SK-N-SH (cell line): ENCODE measurements at regions of chr7 and their contacts with region 1.

Region 1: DNA sequence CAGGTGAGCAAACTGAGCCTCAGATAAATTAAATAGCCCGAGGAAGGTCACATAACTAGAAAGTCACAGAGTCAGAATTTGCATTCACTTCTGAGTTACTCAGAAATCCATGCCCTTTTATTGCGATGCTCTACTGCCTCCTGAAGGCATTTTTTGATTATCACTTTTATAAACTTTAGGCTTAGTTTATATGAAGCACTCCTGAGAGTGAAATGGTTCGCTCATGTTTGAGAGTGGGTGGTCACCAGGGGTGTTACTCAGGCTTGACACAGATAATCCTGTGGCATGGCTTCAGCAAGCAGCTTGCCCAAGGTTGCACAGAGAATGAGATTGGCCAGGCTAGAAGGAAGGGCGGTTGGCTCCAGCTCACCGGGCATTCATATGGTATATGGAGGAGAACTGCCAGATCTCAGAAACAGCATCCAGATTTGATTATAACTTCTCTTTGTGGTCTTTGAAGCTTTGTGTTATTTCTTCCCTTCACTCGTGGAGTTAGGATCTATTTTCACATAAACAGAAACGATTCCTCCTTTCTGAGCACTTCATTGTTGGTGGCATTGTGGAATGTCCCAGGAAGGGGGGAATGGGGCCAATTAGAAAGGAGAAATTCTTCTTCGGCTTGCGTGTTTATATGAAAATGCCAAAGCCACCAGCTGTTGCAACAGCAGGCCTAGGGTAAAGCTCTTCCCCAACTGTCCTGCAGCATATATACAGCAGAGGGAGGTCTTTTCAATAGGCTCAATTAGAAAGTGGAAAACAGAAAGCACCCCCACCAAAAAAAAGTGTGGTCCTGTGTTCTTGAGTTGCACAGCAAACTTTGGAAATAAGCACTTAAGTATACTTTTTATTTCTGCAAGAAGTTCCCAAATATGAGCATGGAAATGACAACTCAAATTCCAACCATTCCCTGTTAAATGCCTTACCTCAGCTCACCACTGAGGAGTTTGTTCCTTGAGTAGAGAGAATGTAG is 628.8 kb downstream of the SUGCT start:
- DNase-seq: peak; percentile 8
- H3K4me3 ChIP-seq: no peak overlapping the region
- H3K27ac ChIP-seq: peak overlapping the region; percentile 39 to 86
- H3K4me1 ChIP-seq: peaks cover 11 to 14% of the 10 kb centered on the region in 2 experiments; a peak in 3 of 4 replicates
- H3K27me3 ChIP-seq: no peaks in the 10 kb centered on the region
- CTCF ChIP-seq: peak; percentile 44
- EP300 ChIP-seq: no peak; a peak in 2 of 4 replicates
- RAD21 ChIP-seq: peak; percentile 75

Region 2: DNA sequence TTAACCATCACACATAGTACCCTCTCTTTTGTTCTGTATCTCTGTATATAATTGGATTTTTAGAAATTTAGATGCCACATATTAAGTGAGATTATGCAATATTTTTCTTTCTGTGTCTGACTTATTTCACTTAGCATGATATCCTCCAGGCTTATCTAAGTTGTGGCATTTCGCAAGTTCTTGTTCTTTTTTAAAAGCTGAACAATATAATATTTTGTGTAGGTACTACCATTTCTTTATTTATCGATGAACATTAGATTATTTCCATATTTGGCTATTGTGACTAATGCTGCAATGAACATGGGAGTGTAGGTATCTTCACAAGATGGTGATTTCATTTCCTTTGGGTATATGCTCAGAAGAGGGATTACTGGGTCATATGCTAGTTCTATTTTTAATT is 333.8 kb before region 1 on chr7:
- CTCF ChIA-PET with region 1: no interaction called
- POLR2A ChIA-PET with region 1: no interaction called
- DNase-seq: no peak
- H3K4me3 ChIP-seq: no peak overlapping the region
- H3K27ac ChIP-seq: no peak overlapping the region
- H3K4me1 ChIP-seq: no peaks in the 10 kb centered on the region
- H3K27me3 ChIP-seq: no peaks in the 10 kb centered on the region
- CTCF ChIP-seq: no peak
- EP300 ChIP-seq: no peak
- RAD21 ChIP-seq: no peak

Region 3: GRCh38 chr7:40749877-40750276 is 13.7 kb before region 1 on chr7:
- CTCF ChIA-PET with region 1: interaction called, 23 read pairs
- POLR2A ChIA-PET with region 1: no interaction called
- DNase-seq: no peak
- H3K4me3 ChIP-seq: no peak overlapping the region
- H3K27ac ChIP-seq: peak overlapping the region; percentile 50 to 84; a peak in 3 of 4 replicates
- H3K4me1 ChIP-seq: peaks cover 22 to 26% of the 10 kb centered on the region in 2 experiments; a peak in 3 of 4 replicates
- H3K27me3 ChIP-seq: no peaks in the 10 kb centered on the region
- CTCF ChIP-seq: no peak
- EP300 ChIP-seq: peak in 1 of 2 experiments; percentile 46; a peak in 1 of 4 replicates
- RAD21 ChIP-seq: no peak

Region 4: GRCh38 chr7:40777748-40778312 is 14.2 kb after region 1 on chr7:
- CTCF ChIA-PET with region 1: interaction called, 18 read pairs
- POLR2A ChIA-PET with region 1: no interaction called
- DNase-seq: no peak
- H3K4me3 ChIP-seq: no peak overlapping the region
- H3K27ac ChIP-seq: no peak overlapping the region
- H3K4me1 ChIP-seq: peaks cover 10 to 19% of the 10 kb centered on the region in 2 experiments
- H3K27me3 ChIP-seq: no peaks in the 10 kb centered on the region
- CTCF ChIP-seq: no peak
- EP300 ChIP-seq: no peak
- RAD21 ChIP-seq: no peak

Region 5: GRCh38 chr7:41010418-41010817 is 246.8 kb after region 1 on chr7:
- CTCF ChIA-PET with region 1: no interaction called
- POLR2A ChIA-PET with region 1: no interaction called
- DNase-seq: no peak
- H3K4me3 ChIP-seq: no peak overlapping the region
- H3K27ac ChIP-seq: no peak overlapping the region
- H3K4me1 ChIP-seq: peaks cover 0 to 6% of the 10 kb centered on the region in 2 experiments; a peak in 1 of 4 replicates
- H3K27me3 ChIP-seq: no peaks in the 10 kb centered on the region
- CTCF ChIP-seq: 0 out of 2 replicates have a peak, but pooled peaks have one; percentile 8
- EP300 ChIP-seq: no peak
- RAD21 ChIP-seq: no peak